ENCODE measurements at regions of chr1 and their contacts with region 1.

Region 1: GRCh38 chr1:205396967-205397616 is 24.8 kb downstream of the LEMD1 start:
- DNase-seq: peak in 4 of 5 donors; percentile 38 to 46 (median 42)
- H3K4me3 ChIP-seq: no peak overlapping the region
- H3K4me3 Mint-ChIP-seq: no peak overlapping the region
- H3K27ac ChIP-seq: no peak overlapping the region
- H3K27ac Mint-ChIP-seq: peak overlapping the region in 1 of 7 donors; percentile 14
- H3K4me1 ChIP-seq: no peaks in the 10 kb centered on the region
- H3K4me1 Mint-ChIP-seq: peaks cover 2 to 9% (median 5%) of the 10 kb centered on the region in 4 donors
- H3K27me3 ChIP-seq: no peaks in the 10 kb centered on the region
- H3K27me3 Mint-ChIP-seq: peaks cover 2 to 10% of the 10 kb centered on the region in 2 donors

Region 2: GRCh38 chr1:205430696-205431305 is 33.7 kb after region 1 on chr1:
- CTCF ChIA-PET with region 1: interaction called, 74 read pairs
- POLR2A ChIA-PET with region 1: interaction called, 9 read pairs
- intact Hi-C with region 1: loop called (anchors 1 kb)
- DNase-seq: peak; percentile 46 to 69 (median 53)
- H3K4me3 ChIP-seq: peak overlapping the region; percentile 41 to 55
- H3K4me3 Mint-ChIP-seq: peak overlapping the region; percentile 81 to 91 (median 84)
- H3K27ac ChIP-seq: no peak overlapping the region
- H3K27ac Mint-ChIP-seq: peak overlapping the region in 5 of 7 donors; percentile 34 to 83 (median 59)
- H3K4me1 ChIP-seq: peaks cover 10% of the 10 kb centered on the region
- H3K4me1 Mint-ChIP-seq: peaks cover 8 to 17% (median 13%) of the 10 kb centered on the region in 4 donors
- H3K27me3 ChIP-seq: no peaks in the 10 kb centered on the region
- H3K27me3 Mint-ChIP-seq: peaks cover 10 to 11% of the 10 kb centered on the region in 2 donors

Region 3: DNA sequence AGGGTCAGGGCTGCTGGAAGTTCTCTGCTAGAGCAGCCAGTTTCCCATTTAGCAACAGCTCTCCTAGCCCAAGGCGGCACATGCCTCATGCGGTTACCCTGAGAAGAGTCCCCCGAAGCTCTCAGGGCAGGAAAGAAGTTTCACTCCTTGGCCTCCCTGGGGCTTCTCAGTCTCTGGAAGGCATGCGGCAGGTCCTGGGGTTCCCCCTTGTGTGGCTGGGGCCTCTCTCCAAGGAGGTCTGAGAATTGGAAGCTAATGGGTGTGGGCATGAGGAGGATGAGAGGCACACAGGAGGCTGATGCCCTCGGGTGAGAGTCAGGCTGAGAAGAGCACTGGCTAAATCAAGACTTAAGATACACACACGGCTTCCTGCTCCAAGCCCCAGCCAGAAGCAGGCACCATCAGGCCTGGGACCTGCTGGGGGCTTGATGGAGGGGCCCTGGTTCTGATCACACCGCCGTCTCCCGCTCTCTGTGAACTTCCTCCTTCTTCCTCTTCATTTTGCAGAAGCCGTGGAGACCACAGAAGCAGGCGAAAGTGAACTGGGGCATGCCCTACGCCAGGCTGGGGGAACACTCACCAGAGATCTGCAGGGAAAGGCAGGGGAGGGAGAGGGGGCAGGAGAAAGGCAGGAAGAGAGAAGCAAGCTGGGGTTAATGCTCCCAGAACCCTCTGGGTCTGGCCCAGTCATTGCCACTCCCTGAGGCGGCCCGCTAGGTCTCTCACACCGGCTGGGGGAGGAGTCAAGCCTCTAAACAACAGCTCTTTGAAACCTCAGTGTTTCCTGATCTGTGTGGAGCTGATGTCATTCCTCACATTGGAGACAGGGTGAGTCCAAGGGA is 43.6 kb after region 1 on chr1:
- CTCF ChIA-PET with region 1: interaction called, 8 read pairs
- POLR2A ChIA-PET with region 1: no interaction called
- intact Hi-C with region 1: loop called (anchors 2 kb)
- DNase-seq: peak; percentile 49 to 81 (median 60)
- H3K4me3 ChIP-seq: peak overlapping the region; percentile 20 to 64
- H3K4me3 Mint-ChIP-seq: peak overlapping the region; percentile 76 to 93 (median 88)
- H3K27ac ChIP-seq: peak overlapping the region; percentile 65
- H3K27ac Mint-ChIP-seq: peak overlapping the region; percentile 78 to 94 (median 91)
- H3K4me1 ChIP-seq: peaks cover 28% of the 10 kb centered on the region
- H3K4me1 Mint-ChIP-seq: peaks cover 23 to 34% (median 26%) of the 10 kb centered on the region in 4 donors
- H3K27me3 ChIP-seq: no peaks in the 10 kb centered on the region
- H3K27me3 Mint-ChIP-seq: peaks cover 0 to 4% of the 10 kb centered on the region in 2 donors

Region 4: DNA sequence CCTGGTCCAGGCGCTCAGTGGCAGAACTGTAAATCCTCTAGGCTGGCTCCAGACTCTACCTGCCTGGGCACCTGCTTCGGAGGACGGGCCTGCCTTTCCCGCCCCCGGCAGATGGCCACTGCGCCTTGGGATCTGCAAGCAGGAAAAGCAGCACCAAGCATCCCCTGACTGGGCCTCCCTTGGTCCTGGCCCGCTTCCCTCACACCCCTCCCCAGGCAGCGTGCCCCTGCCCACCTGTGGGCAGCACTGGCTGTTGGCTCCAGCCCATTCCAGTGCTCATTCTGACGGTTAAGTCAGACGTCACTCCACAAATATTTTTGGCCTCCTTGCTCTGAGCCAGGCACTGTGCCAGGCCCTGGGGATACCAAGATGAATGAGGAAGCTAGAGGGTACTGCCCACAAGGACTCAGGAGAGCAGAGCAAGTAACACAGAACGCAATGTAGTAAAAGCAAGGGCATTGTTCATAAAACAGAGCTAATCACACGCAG is 80.7 kb after region 1 on chr1:
- CTCF ChIA-PET with region 1: interaction called, 27 read pairs
- POLR2A ChIA-PET with region 1: interaction called, 3 read pairs
- intact Hi-C with region 1: no loop called
- DNase-seq: no peak
- H3K4me3 ChIP-seq: no peak overlapping the region
- H3K4me3 Mint-ChIP-seq: no peak overlapping the region
- H3K27ac ChIP-seq: no peak overlapping the region
- H3K27ac Mint-ChIP-seq: peak overlapping the region in 1 of 7 donors; percentile 45
- H3K4me1 ChIP-seq: peaks cover 29% of the 10 kb centered on the region
- H3K4me1 Mint-ChIP-seq: peaks cover 19 to 40% (median 27%) of the 10 kb centered on the region in 4 donors
- H3K27me3 ChIP-seq: no peaks in the 10 kb centered on the region
- H3K27me3 Mint-ChIP-seq: peaks cover 15 to 19% of the 10 kb centered on the region in 2 donors

Measured in CD4-positive, alpha-beta memory T cell (primary cell).